Psoas muscle (tissue), 8 donors: ENCODE measurements at regions of chr16 and their contacts with region 1.

Region 1: DNA sequence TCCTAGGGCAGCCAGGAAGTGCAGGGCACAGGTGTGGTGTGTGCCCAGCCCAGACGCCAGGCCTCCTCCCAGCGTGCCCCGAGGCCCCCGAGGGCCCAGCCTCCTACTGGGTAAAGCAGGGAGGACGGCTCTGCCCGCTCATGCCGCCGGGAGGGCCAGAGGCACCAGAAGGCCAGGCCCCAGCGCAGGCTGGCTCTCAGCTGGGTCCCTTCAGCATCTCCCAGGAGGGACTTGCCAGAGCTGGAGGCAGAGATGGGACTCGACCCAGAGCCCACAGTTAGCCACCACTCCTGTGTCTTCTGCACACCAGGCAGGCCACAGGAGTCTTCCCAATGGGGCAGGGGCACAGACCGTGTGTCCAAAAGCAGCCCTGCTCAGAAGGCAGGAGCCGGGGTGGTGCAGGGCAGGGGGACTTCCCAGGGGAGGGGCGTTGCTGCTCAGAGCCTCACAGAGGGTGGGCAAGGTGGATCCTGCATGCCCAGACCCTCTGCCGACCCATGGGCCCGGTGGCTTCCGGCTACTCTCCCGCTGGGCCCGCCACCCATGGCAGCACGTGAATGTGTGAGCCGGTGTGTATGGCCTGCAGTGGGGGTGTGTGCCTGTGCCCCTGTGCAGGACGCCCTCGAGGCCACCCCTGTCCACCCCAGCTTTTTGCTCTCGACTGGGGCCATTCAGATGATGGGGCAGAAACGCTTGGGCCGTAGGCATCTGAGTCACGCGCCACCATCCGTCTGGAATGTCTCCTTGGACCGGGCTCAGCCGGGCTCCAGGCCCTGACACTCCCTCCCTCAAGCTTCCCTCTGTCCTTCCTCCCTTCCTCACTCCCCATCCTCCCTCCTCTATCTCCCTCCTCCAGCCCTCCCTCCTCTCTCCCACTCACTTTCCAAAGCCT is 5.7 kb upstream of the ZNF469 start:
- DNase-seq: peak; percentile 3 to 38
- ATAC-seq: peak in 3 of 4 donors; percentile 18 to 22 (median 19)
- H3K4me3 ChIP-seq: no peak overlapping the region
- H3K27ac ChIP-seq: no peak overlapping the region
- H3K4me1 ChIP-seq: no peaks in the 10 kb centered on the region
- H3K27me3 ChIP-seq: no peaks in the 10 kb centered on the region
- CTCF ChIP-seq: no peak

Region 2: GRCh38 chr16:88339930-88340754 is 36.9 kb before region 1 on chr16:
- intact Hi-C with region 1: loop called in 1 of 2 experiments (anchors 5 kb)
- DNase-seq: peak in 1 of 2 donors; percentile 35
- ATAC-seq: peak in 1 of 4 donors; percentile 30
- H3K4me3 ChIP-seq: no peak overlapping the region
- H3K27ac ChIP-seq: no peak overlapping the region
- H3K4me1 ChIP-seq: no peaks in the 10 kb centered on the region
- H3K27me3 ChIP-seq: peaks cover 0 to 14% (median 0%) of the 10 kb centered on the region in 3 donors
- CTCF ChIP-seq: no peak

Region 3: GRCh38 chr16:88424587-88425235 is 47.6 kb after region 1 on chr16:
- intact Hi-C with region 1: no loop called
- DNase-seq: no peak
- ATAC-seq: peak; percentile 9 to 69 (median 52)
- H3K4me3 ChIP-seq: no peak overlapping the region
- H3K27ac ChIP-seq: no peak overlapping the region
- H3K4me1 ChIP-seq: no peaks in the 10 kb centered on the region
- H3K27me3 ChIP-seq: peaks cover 0 to 9% (median 0%) of the 10 kb centered on the region in 3 donors
- CTCF ChIP-seq: no peak